ENCODE measurements at regions of chr9 and their contacts with region 1.

Region 1: GRCh38 chr9:70924895-70925547 is 196.4 kb downstream of the TRPM3 start:
- DNase-seq: no peak
- ATAC-seq: peak; percentile 94
- H3K4me3 ChIP-seq: peak overlapping the region; percentile 40 to 76
- H3K27ac ChIP-seq: peak overlapping the region; percentile 88 to 90
- H3K4me1 ChIP-seq: peaks cover 0 to 2% of the 10 kb centered on the region in 2 donors
- H3K27me3 ChIP-seq: no peaks in the 10 kb centered on the region

Region 2: DNA sequence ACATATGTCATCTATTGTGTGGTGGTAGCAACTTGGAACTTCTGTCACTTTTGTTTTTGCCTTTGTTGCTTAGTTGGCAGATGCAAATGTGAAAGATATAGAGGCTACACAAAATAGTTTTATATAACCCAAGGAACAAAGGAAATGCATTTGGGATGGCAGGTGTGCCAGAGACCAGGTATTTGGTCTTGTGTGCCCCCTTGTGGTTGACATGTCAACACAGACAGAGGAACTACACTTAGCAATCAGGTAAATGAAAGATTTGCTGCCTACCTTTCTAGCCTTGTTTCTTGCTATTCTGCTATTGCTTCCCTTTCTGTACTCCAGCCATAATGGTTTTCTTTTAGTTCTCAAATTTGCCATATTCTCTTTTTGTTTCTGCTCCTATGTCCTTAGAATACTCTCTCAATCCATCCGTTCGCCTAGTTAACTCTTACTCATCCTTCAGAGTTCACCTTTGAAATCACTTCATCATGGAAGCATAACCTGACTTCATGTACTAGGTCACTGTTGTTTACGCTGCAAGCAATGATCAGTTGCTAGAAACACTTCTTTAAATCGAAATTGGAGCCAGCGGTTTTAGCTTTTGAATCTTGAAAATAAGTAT is 76.9 kb after region 1 on chr9:
- intact Hi-C with region 1: loop called in 1 of 2 experiments (anchors 2 kb)
- DNase-seq: no peak
- ATAC-seq: no peak
- H3K4me3 ChIP-seq: no peak overlapping the region
- H3K27ac ChIP-seq: no peak overlapping the region
- H3K4me1 ChIP-seq: peaks cover 2 to 10% of the 10 kb centered on the region in 2 donors
- H3K27me3 ChIP-seq: peaks cover 0 to 1% of the 10 kb centered on the region in 2 donors

Region 3: DNA sequence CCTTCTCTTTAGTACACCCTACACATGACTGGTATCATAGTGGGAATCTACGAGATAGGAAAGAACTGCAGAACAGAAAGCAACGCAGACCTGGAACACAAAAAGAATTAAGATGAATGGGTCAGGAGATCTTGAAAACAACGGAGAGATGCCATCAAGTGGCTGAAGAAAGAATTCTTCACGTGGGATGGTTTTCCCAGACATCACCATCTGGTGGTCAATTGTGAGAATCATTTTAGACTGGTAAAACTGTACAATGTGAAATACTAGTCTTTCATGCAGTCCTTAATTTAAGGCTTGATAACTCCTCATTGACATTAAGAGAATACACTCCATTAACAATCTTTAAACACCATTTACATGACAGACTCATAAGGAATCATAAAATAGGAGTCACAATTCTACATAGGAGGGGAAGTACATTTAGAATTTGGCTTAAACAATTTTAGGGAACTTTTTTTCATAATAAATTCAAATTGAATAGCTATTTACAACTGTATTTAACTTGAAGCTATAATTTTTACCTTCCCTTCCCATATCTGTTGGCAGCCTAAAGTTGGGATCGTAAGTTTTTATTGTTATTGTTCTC is 324.8 kb after region 1 on chr9:
- intact Hi-C with region 1: loop called (anchors 5 kb)
- DNase-seq: no peak
- ATAC-seq: peak; percentile 83
- H3K4me3 ChIP-seq: no peak overlapping the region
- H3K27ac ChIP-seq: no peak overlapping the region
- H3K4me1 ChIP-seq: no peaks in the 10 kb centered on the region
- H3K27me3 ChIP-seq: no peaks in the 10 kb centered on the region